ENCODE measurements at regions of chr17 and their contacts with region 1.

Region 1: DNA sequence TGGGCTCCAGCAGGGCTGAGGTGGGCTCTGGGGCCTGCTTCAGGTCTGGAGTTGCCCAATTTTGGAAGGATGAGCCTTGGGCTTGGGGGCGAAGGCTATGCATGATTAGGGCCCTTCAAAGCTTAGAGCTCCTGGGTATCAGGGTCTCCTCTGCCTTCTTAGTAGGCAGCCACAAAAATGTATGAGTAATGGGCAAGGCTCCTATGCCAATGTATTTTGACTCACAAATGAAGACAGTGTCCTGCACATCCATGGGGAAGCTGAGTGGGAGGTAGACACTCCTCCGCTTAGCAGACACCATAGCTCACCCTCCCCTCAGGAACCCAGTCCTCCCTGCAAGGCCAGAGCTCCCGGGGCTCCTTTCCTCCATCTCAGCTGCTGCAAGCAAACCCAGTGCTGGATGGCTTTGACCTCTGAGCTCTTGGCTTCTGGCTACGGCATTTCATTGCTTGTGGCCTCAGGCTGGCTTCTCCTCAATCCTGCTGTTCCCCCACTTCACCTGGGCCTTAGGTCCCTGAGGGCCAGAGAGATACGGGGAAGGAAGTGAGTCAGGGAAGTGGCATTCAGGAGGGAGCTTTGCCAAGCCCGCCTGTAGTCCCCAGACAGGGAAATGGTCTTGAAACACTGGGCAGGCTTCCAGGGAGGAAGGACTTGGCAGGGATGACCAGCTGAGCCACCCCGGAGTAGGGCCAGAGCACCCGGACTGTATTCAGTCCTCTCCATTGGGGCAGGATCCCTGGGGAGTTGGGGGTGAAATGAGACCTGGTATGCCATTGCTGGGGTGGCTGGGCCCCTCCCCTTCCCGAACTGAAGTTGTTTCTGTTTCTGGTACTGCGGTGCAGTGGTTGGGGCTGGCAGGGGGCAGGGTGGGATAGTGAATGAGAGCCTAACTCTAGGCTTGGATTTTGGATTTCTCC is 4.4 kb downstream of the ABCC3 start:
- H3K4me3 ChIP-seq: no peak overlapping the region
- H3K27ac ChIP-seq: no peak overlapping the region; the same call in 1 of the 2 replicates
- H3K4me1 ChIP-seq: peaks cover 3% of the 10 kb centered on the region
- CTCF ChIP-seq: no peak

Region 2: GRCh38 chr17:50425682-50426471 is 213.2 kb before region 1 on chr17 and contains the start of gene ACSF2:
- CTCF ChIA-PET with region 1: no interaction called
- POLR2A ChIA-PET with region 1: no interaction called
- H3K4me3 ChIP-seq: peak within 1 kb of the TSS; percentile 72
- H3K27ac ChIP-seq: peak within 1 kb of the TSS; percentile 71
- H3K4me1 ChIP-seq: peaks cover 10% of the 10 kb centered on the region; the same call in 1 of the 2 replicates
- CTCF ChIP-seq: no peak

Region 3: GRCh38 chr17:50560185-50560824 is 78.8 kb before region 1 on chr17 and contains the start of gene CACNA1G:
- CTCF ChIA-PET with region 1: interaction called, 3 read pairs
- POLR2A ChIA-PET with region 1: interaction called, 11 read pairs
- H3K4me3 ChIP-seq: peak within 1 kb of the TSS; percentile 38
- H3K27ac ChIP-seq: no peak within 1 kb of the TSS; the same call in 1 of the 2 replicates
- H3K4me1 ChIP-seq: peaks cover 5% of the 10 kb centered on the region; the same call in 1 of the 2 replicates
- CTCF ChIP-seq: no peak

Region 4: GRCh38 chr17:50691545-50692447 is 52.7 kb after region 1 on chr17:
- CTCF ChIA-PET with region 1: interaction called, 15 read pairs
- POLR2A ChIA-PET with region 1: no interaction called
- H3K4me3 ChIP-seq: no peak overlapping the region
- H3K27ac ChIP-seq: no peak overlapping the region
- H3K4me1 ChIP-seq: peaks cover 4% of the 10 kb centered on the region; the same call in 1 of the 2 replicates
- CTCF ChIP-seq: no peak

Region 5: DNA sequence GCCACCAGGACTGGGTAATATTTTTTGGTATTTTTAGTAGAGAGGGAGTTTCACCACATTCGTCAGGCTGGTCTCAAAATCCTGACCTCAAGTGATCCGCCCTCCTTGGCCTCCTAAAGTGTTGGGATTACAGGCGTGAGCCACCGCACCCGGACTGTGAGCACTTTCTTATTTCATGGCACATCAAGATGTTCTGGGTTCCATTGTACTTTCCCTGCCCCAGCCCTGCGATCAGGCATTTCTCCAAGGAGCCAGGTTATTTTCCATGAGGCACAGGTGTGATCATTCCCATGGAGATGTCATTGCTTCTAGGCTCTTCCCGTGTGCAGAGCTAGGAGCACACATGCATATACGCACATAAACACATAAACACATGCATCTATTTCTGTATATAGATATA is 130.8 kb after region 1 on chr17:
- CTCF ChIA-PET with region 1: no interaction called
- POLR2A ChIA-PET with region 1: no interaction called
- H3K4me3 ChIP-seq: no peak overlapping the region
- H3K27ac ChIP-seq: no peak overlapping the region
- H3K4me1 ChIP-seq: no peaks in the 10 kb centered on the region
- CTCF ChIP-seq: no peak

Measured in HEK293 (cell line).